Ascending aorta (tissue), 2 donors: ENCODE measurements at regions of chr16 and their contacts with region 1.

Region 1: DNA sequence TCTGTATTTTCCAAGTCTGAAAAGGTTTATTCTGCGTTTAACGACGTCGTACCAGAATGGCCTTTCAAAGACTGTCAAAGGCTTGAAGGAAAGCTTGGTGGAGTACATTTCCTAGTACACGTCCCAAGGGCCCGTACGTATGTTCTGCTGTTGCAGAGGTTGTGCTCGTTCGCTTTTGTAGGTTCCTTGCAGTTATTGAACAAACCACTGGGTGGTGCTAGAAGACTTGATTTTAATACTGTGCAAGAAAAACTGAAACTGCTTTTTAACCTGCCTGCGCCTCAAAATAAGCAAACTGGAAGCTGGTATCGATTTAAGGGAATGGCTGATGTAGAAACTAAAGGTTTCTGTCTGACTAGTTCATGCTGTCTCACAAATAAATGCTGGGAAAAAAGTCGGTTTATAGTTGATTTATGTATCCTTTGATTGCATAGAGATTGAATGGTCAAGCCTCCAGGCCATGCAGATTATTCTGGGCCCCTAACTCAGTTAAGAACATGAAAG is 54.6 kb downstream of the USP10 start:
- DNase-seq: peak in 1 of 2 donors; percentile 87
- H3K4me3 ChIP-seq: no peak overlapping the region
- H3K27ac ChIP-seq: no peak overlapping the region
- H3K4me1 ChIP-seq: peaks cover 0 to 4% of the 10 kb centered on the region in 2 donors
- H3K27me3 ChIP-seq: no peaks in the 10 kb centered on the region
- CTCF ChIP-seq: peak; percentile 62 to 88 (median 84)

Region 2: DNA sequence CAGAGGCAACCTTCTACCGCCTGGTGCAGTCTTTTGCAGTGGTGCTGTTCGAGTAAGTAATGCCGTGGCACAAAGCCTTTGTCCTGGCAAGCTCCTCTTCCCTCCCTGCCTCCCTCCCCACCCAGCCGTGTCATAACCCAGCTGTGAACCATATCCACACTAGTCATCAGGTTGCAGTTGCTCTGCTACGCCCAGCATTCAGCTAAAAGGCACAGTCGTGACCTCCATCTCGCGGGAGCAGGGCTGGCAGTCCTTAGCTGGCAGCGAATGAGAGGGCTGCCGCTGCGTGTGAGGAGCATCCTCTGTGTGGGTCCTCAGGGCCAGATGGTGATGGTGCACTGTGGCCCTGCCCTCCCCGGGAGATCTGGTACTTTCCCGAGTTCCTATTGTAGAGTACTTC is 318.5 kb after region 1 on chr16:
- intact Hi-C with region 1: loop called (anchors 10 kb)
- DNase-seq: no peak
- H3K4me3 ChIP-seq: no peak overlapping the region
- H3K27ac ChIP-seq: no peak overlapping the region
- H3K4me1 ChIP-seq: no peaks in the 10 kb centered on the region
- H3K27me3 ChIP-seq: no peaks in the 10 kb centered on the region
- CTCF ChIP-seq: no peak